ENCODE measurements at regions of chr10 and their contacts with region 1.

Region 1: GRCh38 chr10:21495752-21496342 is 29.6 kb downstream of the SKIDA1 start:
- DNase-seq: peak; percentile 77 to 94 (median 85)
- ATAC-seq: peak; percentile 85
- H3K4me3 ChIP-seq: peak overlapping the region; percentile 73 to 79
- H3K4me3 Mint-ChIP-seq: peak overlapping the region; percentile 81
- H3K27ac ChIP-seq: no peak overlapping the region
- H3K27ac Mint-ChIP-seq: no peak overlapping the region
- H3K4me1 ChIP-seq: peaks cover 35% of the 10 kb centered on the region
- H3K4me1 Mint-ChIP-seq: peaks cover 19% of the 10 kb centered on the region
- H3K27me3 ChIP-seq: peaks cover 53 to 58% of the 10 kb centered on the region in 2 experiments
- H3K27me3 Mint-ChIP-seq: peaks cover 60% of the 10 kb centered on the region
- CTCF ChIP-seq: peak; percentile 98

Region 2: DNA sequence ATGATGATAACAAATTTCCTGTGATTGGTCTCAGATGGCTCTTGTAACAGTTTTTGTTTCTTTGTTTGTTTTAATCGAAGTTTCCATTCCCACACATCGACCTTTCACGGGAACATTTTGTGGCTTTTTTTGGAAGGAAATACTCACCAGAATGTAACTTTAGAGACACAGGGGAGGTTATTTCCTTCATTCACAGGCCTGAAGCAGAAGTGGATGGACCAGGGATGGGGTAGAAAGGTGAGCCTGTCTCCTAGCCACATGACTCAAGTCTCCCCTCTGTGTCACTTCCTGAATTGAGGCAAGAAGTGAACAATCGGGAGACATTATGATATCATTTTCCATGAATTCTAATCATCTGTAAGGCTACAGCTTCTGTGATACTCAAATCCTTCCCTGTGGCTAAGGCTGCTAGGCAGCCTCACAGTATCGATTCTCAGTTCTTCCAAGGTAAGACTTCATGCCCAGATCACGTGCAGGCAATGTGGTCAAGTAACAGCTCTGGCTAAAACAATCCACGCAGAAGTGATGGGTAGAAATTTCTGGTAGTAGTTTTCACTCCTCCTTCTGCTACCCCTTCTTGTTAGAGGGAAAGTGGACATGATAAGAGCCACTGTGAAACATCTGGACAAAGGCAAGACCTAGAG is 394.9 kb before region 1 on chr10:
- CTCF ChIA-PET with region 1: no interaction called
- POLR2A ChIA-PET with region 1: no interaction called
- intact Hi-C with region 1: no loop called
- DNase-seq: no peak
- ATAC-seq: no peak
- H3K4me3 ChIP-seq: no peak overlapping the region
- H3K4me3 Mint-ChIP-seq: no peak overlapping the region
- H3K27ac ChIP-seq: no peak overlapping the region
- H3K27ac Mint-ChIP-seq: no peak overlapping the region
- H3K4me1 ChIP-seq: no peaks in the 10 kb centered on the region
- H3K4me1 Mint-ChIP-seq: peaks cover 9% of the 10 kb centered on the region
- H3K27me3 ChIP-seq: no peaks in the 10 kb centered on the region
- H3K27me3 Mint-ChIP-seq: no peaks in the 10 kb centered on the region
- CTCF ChIP-seq: no peak

Region 3: GRCh38 chr10:21437770-21438382 is 58.0 kb before region 1 on chr10:
- CTCF ChIA-PET with region 1: no interaction called
- POLR2A ChIA-PET with region 1: no interaction called
- intact Hi-C with region 1: no loop called
- DNase-seq: no peak
- ATAC-seq: no peak
- H3K4me3 ChIP-seq: no peak overlapping the region
- H3K4me3 Mint-ChIP-seq: no peak overlapping the region
- H3K27ac ChIP-seq: no peak overlapping the region
- H3K27ac Mint-ChIP-seq: no peak overlapping the region
- H3K4me1 ChIP-seq: no peaks in the 10 kb centered on the region
- H3K4me1 Mint-ChIP-seq: no peaks in the 10 kb centered on the region
- H3K27me3 ChIP-seq: no peaks in the 10 kb centered on the region
- H3K27me3 Mint-ChIP-seq: peaks cover 7% of the 10 kb centered on the region
- CTCF ChIP-seq: no peak

Region 4: GRCh38 chr10:21516242-21517131 is 20.6 kb after region 1 on chr10:
- CTCF ChIA-PET with region 1: interaction called, 15 read pairs
- POLR2A ChIA-PET with region 1: interaction called, 6 read pairs
- intact Hi-C with region 1: loop called (anchors 2 kb)
- DNase-seq: peak in 5 of 9 experiments; percentile 43 to 78 (median 70)
- ATAC-seq: peak; percentile 66
- H3K4me3 ChIP-seq: peak overlapping the region; percentile 29 to 33
- H3K4me3 Mint-ChIP-seq: peak overlapping the region; percentile 83
- H3K27ac ChIP-seq: no peak overlapping the region
- H3K27ac Mint-ChIP-seq: no peak overlapping the region
- H3K4me1 ChIP-seq: peaks cover 38% of the 10 kb centered on the region
- H3K4me1 Mint-ChIP-seq: peaks cover 36% of the 10 kb centered on the region
- H3K27me3 ChIP-seq: peaks cover 68 to 71% of the 10 kb centered on the region in 2 experiments
- H3K27me3 Mint-ChIP-seq: peaks cover 82% of the 10 kb centered on the region
- CTCF ChIP-seq: no peak

Region 5: DNA sequence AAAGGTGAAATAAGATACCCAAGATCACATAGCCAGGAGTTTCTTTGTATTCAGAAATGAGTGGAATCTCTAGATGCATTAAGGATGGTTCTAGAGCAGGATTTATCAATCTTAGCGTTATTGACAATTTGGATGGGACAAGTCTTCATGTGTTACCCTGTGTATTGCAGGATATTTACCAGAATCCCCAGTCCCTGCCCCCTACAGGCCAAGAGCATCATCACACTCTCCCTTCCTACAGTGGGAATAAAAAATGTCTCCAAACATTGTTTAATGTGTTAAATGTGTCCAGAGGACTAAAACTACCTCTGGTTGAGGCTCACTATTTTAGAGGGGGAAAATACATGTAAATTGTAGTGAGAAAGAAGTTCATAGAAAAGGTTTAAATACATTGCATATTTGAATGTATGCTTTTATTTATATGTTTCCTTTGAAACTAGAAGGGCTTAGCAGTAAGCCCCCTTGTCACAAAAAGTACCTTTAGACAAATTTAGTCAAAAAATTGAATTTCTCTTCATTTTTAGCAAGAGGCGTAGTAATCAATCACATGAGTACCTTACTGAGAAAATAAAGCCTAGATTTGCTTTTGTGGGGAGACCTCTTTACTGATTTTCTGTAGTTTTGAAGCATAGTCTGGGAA is 179.4 kb after region 1 on chr10:
- CTCF ChIA-PET with region 1: interaction called, 3 read pairs
- POLR2A ChIA-PET with region 1: no interaction called
- intact Hi-C with region 1: loop called in 1 of 2 experiments (anchors 2 kb)
- DNase-seq: peak in 5 of 9 experiments; percentile 2 to 56 (median 30)
- ATAC-seq: peak; percentile 78
- H3K4me3 ChIP-seq: no peak overlapping the region
- H3K4me3 Mint-ChIP-seq: no peak overlapping the region
- H3K27ac ChIP-seq: no peak overlapping the region
- H3K27ac Mint-ChIP-seq: no peak overlapping the region
- H3K4me1 ChIP-seq: no peaks in the 10 kb centered on the region
- H3K4me1 Mint-ChIP-seq: peaks cover 19% of the 10 kb centered on the region
- H3K27me3 ChIP-seq: no peaks in the 10 kb centered on the region
- H3K27me3 Mint-ChIP-seq: no peaks in the 10 kb centered on the region
- CTCF ChIP-seq: peak; percentile 90

Region 6: DNA sequence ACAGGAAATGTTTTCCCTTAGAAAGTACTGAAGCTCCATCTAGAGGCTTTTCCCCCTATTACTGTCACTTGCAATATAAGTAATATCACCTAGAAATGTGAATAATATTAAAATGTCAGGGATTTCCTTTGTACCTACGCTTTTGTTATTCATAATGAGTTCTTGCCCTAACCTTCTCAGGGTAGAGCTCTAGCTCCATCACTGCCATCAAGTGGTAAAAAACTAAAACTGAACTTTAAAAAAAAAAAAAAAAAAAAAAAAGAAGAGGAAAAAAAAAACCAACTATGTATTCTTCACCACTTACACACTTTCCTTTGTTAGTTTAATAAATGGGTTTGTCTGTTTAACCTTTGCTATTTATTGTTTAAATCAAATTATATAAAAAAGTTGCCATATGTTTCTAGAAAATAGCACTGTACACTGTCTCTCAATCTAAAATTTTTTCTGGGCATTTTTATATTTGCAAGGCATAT is 457.8 kb after region 1 on chr10:
- CTCF ChIA-PET with region 1: interaction called, 5 read pairs
- POLR2A ChIA-PET with region 1: no interaction called
- intact Hi-C with region 1: loop called (anchors 1 kb)
- DNase-seq: peak in 2 of 9 experiments; percentile 34 to 59
- ATAC-seq: peak; percentile 44
- H3K4me3 ChIP-seq: no peak overlapping the region
- H3K4me3 Mint-ChIP-seq: no peak overlapping the region
- H3K27ac ChIP-seq: no peak overlapping the region
- H3K27ac Mint-ChIP-seq: no peak overlapping the region
- H3K4me1 ChIP-seq: no peaks in the 10 kb centered on the region
- H3K4me1 Mint-ChIP-seq: no peaks in the 10 kb centered on the region
- H3K27me3 ChIP-seq: no peaks in the 10 kb centered on the region
- H3K27me3 Mint-ChIP-seq: no peaks in the 10 kb centered on the region
- CTCF ChIP-seq: peak; percentile 59

Region 7: DNA sequence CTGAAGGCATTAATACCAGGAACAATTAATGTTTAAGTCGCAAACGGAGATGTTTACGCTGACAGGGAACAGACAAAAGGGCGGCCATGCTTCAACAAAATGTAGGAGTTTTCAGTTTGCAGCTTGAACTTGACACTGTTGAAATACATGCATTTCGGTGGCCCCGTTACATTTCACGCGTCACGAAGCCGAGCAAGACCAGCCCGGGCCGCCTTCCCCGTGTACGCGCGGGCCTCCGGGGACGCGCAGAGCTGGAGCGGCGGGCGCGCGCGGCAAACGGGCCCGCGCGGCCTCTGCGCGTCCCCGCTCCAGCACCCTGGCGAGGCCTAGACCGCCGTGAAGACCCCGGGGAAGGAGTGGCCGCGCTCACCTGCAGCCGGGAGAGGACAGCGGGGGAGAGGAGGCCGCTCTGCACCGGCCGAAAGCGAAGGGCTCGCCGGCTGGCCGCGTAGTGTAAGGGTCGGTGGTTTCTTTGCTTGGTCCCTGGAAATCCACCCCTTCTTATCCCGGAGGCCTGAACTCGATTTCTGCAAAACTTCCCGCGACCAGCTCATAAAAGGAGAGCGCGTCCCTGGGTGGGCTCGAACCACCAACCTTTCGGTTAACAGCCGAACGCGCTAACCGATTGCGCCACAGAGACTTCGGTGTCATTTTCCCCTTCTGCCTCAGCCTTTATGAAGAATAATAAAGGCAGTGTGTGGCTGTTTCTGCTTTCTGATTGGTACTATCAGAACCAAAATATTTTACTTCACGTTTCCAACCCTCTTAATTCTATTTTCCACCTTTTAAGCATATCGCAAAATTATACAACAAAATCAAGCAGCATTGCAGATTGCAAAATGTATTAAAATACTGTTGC is 733.3 kb after region 1 on chr10:
- CTCF ChIA-PET with region 1: no interaction called
- POLR2A ChIA-PET with region 1: no interaction called
- intact Hi-C with region 1: loop called (anchors 1 to 2 kb)
- DNase-seq: peak; percentile 66 to 92 (median 86)
- ATAC-seq: peak; percentile 76
- H3K4me3 ChIP-seq: peak overlapping the region; percentile 67 to 77
- H3K4me3 Mint-ChIP-seq: peak overlapping the region; percentile 82
- H3K27ac ChIP-seq: peak overlapping the region; percentile 60 to 63
- H3K27ac Mint-ChIP-seq: peak overlapping the region; percentile 98
- H3K4me1 ChIP-seq: peaks cover 8% of the 10 kb centered on the region
- H3K4me1 Mint-ChIP-seq: peaks cover 14% of the 10 kb centered on the region
- H3K27me3 ChIP-seq: peaks cover 0 to 3% of the 10 kb centered on the region in 2 experiments
- H3K27me3 Mint-ChIP-seq: no peaks in the 10 kb centered on the region
- CTCF ChIP-seq: no peak

Region 8: DNA sequence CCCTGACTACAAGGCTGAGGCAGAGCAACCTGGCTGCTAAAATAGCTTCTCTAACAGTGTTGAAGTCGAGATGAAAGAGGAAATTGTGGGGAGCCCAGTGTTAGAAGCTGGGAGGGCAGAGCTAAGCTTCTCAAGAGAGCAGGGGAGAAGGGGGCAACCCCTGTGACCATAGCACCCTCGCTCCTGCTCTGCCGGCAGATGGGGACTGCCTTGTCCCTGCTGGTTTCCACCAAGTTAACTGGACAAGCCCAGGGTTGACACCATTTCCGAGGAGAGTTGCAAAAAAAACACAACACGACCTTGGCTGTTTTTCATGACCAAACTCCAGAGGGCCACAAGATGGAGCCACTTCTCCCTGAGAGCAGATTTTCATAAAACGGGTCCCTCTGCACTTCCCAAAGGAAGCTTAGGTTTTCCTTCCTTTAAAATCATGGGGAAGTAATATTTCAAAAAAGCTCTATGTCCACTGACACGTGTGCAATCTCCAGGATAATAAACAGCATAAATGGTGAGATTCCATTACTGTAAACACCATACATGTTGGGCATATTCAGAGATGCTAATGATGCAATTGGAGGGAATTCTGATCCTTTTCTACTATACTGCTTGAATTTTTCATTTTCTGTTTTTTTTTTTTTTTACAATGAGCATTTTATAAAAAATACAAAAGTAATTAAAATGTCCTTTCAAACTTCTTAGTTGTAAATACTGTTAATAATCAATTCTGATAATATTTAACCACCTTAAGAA is 1078.1 kb after region 1 on chr10:
- CTCF ChIA-PET with region 1: no interaction called
- POLR2A ChIA-PET with region 1: no interaction called
- intact Hi-C with region 1: loop called (anchors 5 to 10 kb)
- DNase-seq: peak in 7 of 9 experiments; percentile 2 to 82 (median 43)
- ATAC-seq: peak; percentile 64
- H3K4me3 ChIP-seq: no peak overlapping the region
- H3K4me3 Mint-ChIP-seq: peak overlapping the region; percentile 71
- H3K27ac ChIP-seq: peak overlapping the region in 1 of 2 experiments; percentile 63
- H3K27ac Mint-ChIP-seq: peak overlapping the region; percentile 94
- H3K4me1 ChIP-seq: peaks cover 35% of the 10 kb centered on the region
- H3K4me1 Mint-ChIP-seq: peaks cover 73% of the 10 kb centered on the region
- H3K27me3 ChIP-seq: no peaks in the 10 kb centered on the region
- H3K27me3 Mint-ChIP-seq: no peaks in the 10 kb centered on the region
- CTCF ChIP-seq: peak; percentile 79